ENCODE measurements at regions of chr19 and their contacts with region 1.

Region 1: GRCh38 chr19:32537580-32537979 is 43.4 kb upstream of the PDCD5 start:
- DNase-seq: no peak
- H3K4me3 ChIP-seq: no peak overlapping the region
- H3K27ac ChIP-seq: no peak overlapping the region
- H3K4me1 ChIP-seq: no peaks in the 10 kb centered on the region
- H3K27me3 ChIP-seq: peaks cover 3% of the 10 kb centered on the region
- CTCF ChIP-seq: no peak

Region 2: GRCh38 chr19:31674503-31675186 is 862.9 kb before region 1 on chr19:
- CTCF ChIA-PET with region 1: no interaction called
- dilution Hi-C with region 1: no loop called
- in situ Hi-C with region 1: no loop called
- intact Hi-C with region 1: no loop called
- DNase-seq: peak; percentile 81
- H3K4me3 ChIP-seq: no peak overlapping the region
- H3K27ac ChIP-seq: peak overlapping the region; percentile 53
- H3K4me1 ChIP-seq: peaks cover 6% of the 10 kb centered on the region
- H3K27me3 ChIP-seq: no peaks in the 10 kb centered on the region
- CTCF ChIP-seq: no peak

Region 3: DNA sequence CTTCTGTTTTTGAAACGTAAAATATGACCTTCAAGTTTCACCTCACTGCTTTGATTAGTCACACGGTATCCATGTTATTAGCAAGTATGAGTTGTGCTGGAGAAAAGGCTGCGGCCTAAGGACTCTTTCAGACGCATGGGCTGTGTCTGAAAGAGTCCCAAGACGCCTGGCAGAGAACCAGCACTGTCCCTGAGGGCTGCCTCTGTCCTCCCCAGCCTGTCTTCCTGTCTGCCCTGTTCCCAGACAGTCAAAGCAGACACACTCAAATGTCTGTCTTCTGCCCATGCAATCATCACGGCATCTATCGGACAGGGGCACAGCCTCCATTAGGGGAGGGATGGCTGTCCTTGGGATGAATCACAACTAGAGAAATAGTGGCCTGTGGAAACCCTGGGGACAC is 66.5 kb before region 1 on chr19:
- CTCF ChIA-PET with region 1: no interaction called
- dilution Hi-C with region 1: loop called (anchors 5 kb)
- in situ Hi-C with region 1: no loop called
- intact Hi-C with region 1: no loop called
- DNase-seq: no peak
- H3K4me3 ChIP-seq: no peak overlapping the region
- H3K27ac ChIP-seq: no peak overlapping the region
- H3K4me1 ChIP-seq: no peaks in the 10 kb centered on the region
- H3K27me3 ChIP-seq: peaks cover 2% of the 10 kb centered on the region
- CTCF ChIP-seq: no peak